Dorsolateral prefrontal cortex (tissue), 120 donors: ENCODE measurements at regions of chr19 and their contacts with region 1.

Region 1: DNA sequence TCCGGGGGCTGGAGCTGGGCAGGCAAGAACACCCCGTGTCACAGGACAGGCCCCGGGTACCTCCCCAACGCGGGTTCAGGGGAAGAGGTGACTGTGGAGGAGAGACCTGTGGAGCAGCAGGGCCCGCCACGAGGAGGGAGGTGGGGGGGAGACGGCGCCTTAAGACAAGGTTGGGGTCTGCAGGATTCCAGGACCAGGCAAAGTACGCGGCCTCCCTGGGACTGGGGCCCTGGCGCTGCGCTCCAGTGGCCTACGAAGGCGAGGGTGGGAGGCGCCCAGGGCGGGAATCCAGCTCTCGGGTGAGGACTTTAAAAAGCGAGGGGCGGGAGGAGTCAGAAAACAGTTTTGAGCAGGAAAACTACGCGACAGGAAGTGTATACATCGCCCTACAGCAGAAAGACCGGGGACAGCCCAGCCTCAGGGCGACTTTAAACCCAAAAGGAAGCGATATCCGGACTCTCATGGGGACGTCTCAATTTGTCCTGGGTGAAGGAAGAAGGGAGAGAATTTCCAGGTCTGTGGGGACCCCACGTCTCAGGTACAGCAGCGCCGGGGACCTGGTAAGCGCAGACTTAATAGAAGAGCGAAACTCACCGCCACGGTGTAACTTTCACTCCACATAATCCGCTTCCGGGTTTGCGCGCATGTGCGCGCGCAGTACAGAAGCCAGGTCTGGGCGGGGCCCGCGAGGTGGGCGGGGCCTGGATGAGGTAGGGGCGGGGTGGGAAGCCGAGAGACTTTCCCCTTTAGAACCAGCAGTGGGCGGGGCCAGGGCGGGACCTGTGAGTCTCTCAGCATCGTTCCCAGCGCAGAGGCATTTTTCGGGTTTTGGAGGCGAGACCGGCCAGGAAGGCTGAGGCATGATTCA is at the start of gene ZNF83:
- DNase-seq: peak; percentile 81 to 97 (median 92)
- H3K4me3 ChIP-seq: peak within 1 kb of the TSS; percentile 59 to 94 (median 79)
- H3K27ac ChIP-seq: peak within 1 kb of the TSS in 49 of 59 donors; percentile 9 to 88 (median 66)
- H3K27me3 ChIP-seq: no peaks in the 10 kb centered on the region
- CTCF ChIP-seq: peak in 4 of 56 donors; percentile 11 to 14 (median 12)
- total RNA-seq, gene ZNF83: 30.2 to 101 (median 53.8) TPM

Region 2: GRCh38 chr19:52520003-52520402 is 117.9 kb before region 1 on chr19:
- intact Hi-C with region 1: no loop called
- DNase-seq: no peak
- H3K4me3 ChIP-seq: no peak overlapping the region
- H3K27ac ChIP-seq: no peak overlapping the region
- H3K27me3 ChIP-seq: no peaks in the 10 kb centered on the region
- CTCF ChIP-seq: no peak

Region 3: DNA sequence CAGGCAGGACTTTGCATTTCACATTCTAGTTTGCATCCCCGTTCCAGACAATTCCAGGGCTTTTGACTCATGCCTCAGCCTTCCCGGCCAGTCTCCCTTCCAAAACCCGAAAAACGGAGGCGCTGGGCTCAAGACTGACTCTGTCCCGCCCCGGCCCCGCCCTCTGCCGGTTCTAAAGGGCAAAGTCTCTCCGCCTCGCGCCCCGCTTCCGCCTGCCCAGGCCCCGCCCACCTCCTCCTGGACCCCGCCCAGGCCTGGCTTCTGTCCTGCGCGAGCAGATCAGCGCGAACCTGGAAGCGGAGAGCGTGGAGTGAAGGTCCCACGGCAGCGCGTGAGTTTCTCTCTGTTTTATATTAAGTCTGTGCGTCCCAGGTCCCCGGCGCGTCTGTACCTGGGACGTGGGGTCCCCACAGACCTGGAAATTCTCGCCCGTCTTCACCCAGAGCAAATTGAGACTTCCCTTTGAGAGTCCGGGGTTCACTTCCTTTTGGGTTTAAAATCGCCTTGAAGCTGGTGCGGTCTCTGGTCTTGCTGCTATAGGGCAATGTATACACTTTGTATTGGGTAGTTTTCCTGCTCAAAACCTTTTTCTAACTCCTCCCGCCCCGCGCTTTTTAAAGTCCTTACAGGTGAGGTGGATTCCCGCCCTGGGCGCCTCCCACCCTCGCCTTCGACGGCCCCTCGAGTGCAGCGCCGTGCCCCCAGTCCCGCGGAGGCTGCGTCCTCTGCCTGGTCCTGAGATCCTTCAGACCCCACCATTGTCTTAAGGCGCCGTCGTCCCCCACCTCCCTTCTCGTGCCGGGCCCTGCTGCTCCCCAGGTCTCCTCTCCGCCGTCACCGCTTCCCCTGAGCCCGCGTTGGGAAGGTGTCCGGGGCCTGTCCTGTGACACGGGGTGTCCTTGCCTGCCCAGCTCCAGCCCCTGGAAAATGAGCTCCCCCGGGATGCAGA is 36.7 kb before region 1 on chr19:
- intact Hi-C with region 1: loop called in 1 of 2 experiments (anchors 5 kb)
- DNase-seq: peak; percentile 68 to 93 (median 82)
- H3K4me3 ChIP-seq: peak overlapping the region; percentile 25 to 80 (median 65)
- H3K27ac ChIP-seq: peak overlapping the region in 26 of 59 donors; percentile 1 to 78 (median 47)
- H3K27me3 ChIP-seq: no peaks in the 10 kb centered on the region
- CTCF ChIP-seq: peak in 51 of 56 donors; percentile 6 to 61 (median 41)

Region 4: GRCh38 chr19:52690369-52691214 is 52.6 kb after region 1 on chr19:
- intact Hi-C with region 1: loop called in 1 of 2 experiments (anchors 5 kb)
- DNase-seq: peak; percentile 85 to 96 (median 90)
- H3K4me3 ChIP-seq: peak overlapping the region; percentile 56 to 89 (median 72)
- H3K27ac ChIP-seq: peak overlapping the region; percentile 19 to 99 (median 89)
- H3K27me3 ChIP-seq: no peaks in the 10 kb centered on the region
- CTCF ChIP-seq: peak in 48 of 56 donors; percentile 8 to 66 (median 44)

Region 5: GRCh38 chr19:52742516-52742915 is 104.6 kb after region 1 on chr19:
- intact Hi-C with region 1: no loop called
- DNase-seq: no peak
- H3K4me3 ChIP-seq: no peak overlapping the region
- H3K27ac ChIP-seq: no peak overlapping the region
- H3K27me3 ChIP-seq: no peaks in the 10 kb centered on the region
- CTCF ChIP-seq: no peak

Region 6: GRCh38 chr19:52959623-52960295 is 321.8 kb after region 1 on chr19:
- intact Hi-C with region 1: no loop called
- DNase-seq: no peak
- H3K4me3 ChIP-seq: no peak overlapping the region
- H3K27ac ChIP-seq: no peak overlapping the region
- H3K27me3 ChIP-seq: no peaks in the 10 kb centered on the region
- CTCF ChIP-seq: no peak